ENCODE measurements at regions of chr1 and their contacts with region 1.

Region 1: DNA sequence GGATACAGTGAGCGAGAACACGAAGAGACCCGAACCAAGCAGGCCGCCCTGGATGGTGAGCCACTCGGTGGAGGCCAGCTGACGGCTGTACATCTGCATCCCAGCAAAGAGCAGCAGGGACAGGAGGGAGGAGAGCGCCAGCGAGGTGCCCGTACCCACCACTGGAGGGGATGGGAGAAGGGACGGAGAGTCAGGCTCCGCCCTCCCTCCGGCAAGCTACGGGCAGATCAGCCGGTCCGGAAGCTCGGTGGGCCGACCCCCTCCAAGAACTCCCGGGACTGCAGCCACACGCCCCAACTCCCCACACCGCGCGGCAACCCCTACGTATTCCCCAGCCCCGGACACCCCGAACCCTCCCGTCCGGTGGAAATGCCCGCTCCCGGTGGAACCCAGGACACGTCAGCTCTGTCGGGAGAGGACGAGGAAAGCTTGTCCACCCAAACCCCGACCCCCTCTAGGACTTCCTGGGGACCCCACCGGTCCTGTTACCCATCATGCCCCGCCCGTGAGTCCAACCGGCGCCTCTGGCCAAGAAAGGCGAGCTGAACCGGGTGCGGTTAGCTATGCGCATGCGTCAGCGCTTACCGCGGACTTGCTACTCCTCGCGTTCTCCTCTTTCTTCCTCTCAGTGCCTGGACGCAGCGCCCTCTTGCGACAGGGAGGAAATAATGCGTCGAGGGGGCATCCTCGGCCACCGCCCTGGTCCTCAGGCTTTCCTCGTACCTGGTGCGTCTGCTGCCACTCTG is at the start of gene KRTCAP2:
- DNase-seq: peak; percentile 97
- ATAC-seq: peak; percentile 83
- H3K4me3 Mint-ChIP-seq: peak within 1 kb of the TSS; percentile 96
- H3K27ac Mint-ChIP-seq: peak within 1 kb of the TSS; percentile 98
- H3K4me1 Mint-ChIP-seq: peaks cover 45% of the 10 kb centered on the region
- H3K27me3 Mint-ChIP-seq: no peaks in the 10 kb centered on the region
- CTCF ChIP-seq: peak; percentile 91
- total RNA-seq, gene KRTCAP2: 124 to 125 TPM

Region 2: GRCh38 chr1:154791292-154792166 is 381.4 kb before region 1 on chr1:
- CTCF ChIA-PET with region 1: no interaction called
- POLR2A ChIA-PET with region 1: no interaction called
- intact Hi-C with region 1: no loop called
- DNase-seq: peak; percentile 95
- ATAC-seq: peak; percentile 92
- H3K4me3 Mint-ChIP-seq: peak overlapping the region; percentile 57
- H3K27ac Mint-ChIP-seq: peak overlapping the region; percentile 87
- H3K4me1 Mint-ChIP-seq: peaks cover 31% of the 10 kb centered on the region
- H3K27me3 Mint-ChIP-seq: no peaks in the 10 kb centered on the region
- CTCF ChIP-seq: no peak

Region 3: GRCh38 chr1:155063550-155064110 is 109.3 kb before region 1 on chr1 and contains the start of gene EFNA4:
- CTCF ChIA-PET with region 1: interaction called, 10 read pairs
- POLR2A ChIA-PET with region 1: interaction called, 5 read pairs
- intact Hi-C with region 1: no loop called
- DNase-seq: peak; percentile 88
- ATAC-seq: peak; percentile 80
- H3K4me3 Mint-ChIP-seq: peak within 1 kb of the TSS; percentile 77
- H3K27ac Mint-ChIP-seq: peak within 1 kb of the TSS; percentile 39
- H3K4me1 Mint-ChIP-seq: peaks cover 32% of the 10 kb centered on the region
- H3K27me3 Mint-ChIP-seq: no peaks in the 10 kb centered on the region
- CTCF ChIP-seq: no peak
- total RNA-seq, gene EFNA4: 7.1 to 7.8 TPM

Region 4: DNA sequence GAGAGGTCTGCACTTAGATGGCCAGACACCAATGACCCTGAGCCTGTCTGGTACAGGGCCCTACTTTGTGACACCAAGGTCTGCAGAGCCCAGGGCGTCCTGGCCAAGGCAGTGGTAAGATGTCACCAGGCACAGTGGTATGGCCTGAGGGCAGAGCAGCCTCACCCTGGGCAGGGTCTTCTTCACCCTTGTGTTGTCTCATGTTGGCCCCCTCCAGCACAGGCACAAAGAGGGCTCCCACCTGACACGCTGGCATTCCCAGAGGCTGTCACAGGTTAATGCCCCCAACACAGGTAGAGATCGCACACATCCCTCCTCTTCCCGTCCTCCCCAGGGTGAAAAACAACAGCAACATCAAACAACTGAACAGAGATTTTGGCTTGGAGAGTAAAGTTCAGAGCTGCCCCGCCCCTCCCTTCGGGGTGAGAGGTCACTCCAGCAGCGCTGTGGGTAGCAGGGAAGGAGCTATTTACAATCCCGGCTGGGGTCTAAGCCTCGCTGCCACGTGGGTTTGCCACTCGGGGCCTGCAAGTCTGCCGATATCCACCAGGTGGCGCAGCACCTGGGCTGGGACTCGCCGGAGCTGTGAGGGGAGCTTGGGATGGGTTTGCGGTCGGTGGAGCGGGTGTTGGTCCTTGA is 81.7 kb before region 1 on chr1:
- CTCF ChIA-PET with region 1: interaction called, 312 read pairs
- POLR2A ChIA-PET with region 1: interaction called, 10 read pairs
- intact Hi-C with region 1: no loop called
- DNase-seq: peak; percentile 86
- ATAC-seq: peak; percentile 88
- H3K4me3 Mint-ChIP-seq: peak overlapping the region; percentile 12
- H3K27ac Mint-ChIP-seq: no peak overlapping the region
- H3K4me1 Mint-ChIP-seq: peaks cover 2% of the 10 kb centered on the region
- H3K27me3 Mint-ChIP-seq: peaks cover 9% of the 10 kb centered on the region
- CTCF ChIP-seq: peak; percentile 99

Region 5: GRCh38 chr1:155145491-155145890 is 27.4 kb before region 1 on chr1:
- CTCF ChIA-PET with region 1: interaction called, 69 read pairs
- POLR2A ChIA-PET with region 1: interaction called, 4 read pairs
- intact Hi-C with region 1: no loop called
- DNase-seq: no peak
- ATAC-seq: no peak
- H3K4me3 Mint-ChIP-seq: no peak overlapping the region
- H3K27ac Mint-ChIP-seq: no peak overlapping the region
- H3K4me1 Mint-ChIP-seq: peaks cover 7% of the 10 kb centered on the region
- H3K27me3 Mint-ChIP-seq: peaks cover 7% of the 10 kb centered on the region
- CTCF ChIP-seq: no peak

Region 6: DNA sequence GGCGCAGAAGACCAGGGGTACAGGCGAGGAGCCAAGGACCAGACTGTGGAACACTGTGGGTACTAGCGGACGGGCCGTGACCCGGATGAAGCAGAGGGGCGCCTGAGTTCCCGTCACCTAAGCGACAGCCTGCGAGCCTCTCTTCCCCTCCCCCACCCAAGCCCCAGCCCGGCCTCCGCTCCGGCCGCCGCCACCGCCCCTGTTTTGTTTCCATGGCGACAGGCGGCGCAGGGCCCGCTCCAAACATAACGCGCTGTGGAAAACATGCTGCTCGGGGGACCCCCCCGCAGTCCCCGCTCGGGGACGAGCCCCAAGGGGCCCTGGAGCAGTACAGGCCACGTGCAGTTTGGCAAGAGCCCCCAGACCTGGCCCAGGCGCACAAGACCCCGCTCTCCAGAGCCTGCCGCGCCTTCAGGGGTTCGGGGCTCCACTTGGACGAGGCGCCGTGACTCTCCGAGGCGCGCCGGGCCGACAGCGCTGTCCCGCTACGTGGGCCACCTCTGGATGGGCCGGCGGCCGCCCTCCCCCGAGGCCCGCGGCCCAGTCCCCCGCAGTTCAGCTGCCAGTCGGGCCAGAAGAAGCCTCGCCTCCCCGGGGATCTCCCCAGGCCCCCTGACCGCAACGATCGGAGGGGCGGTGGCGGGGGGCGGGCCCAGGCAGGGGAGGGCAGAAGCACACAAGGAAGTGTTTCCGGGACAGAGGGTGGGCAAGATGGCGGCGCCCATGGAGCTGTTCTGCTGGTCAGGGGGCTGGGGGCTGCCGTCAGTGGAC is 35.8 kb after region 1 on chr1 and contains the start of gene MTX1:
- CTCF ChIA-PET with region 1: interaction called, 41 read pairs
- POLR2A ChIA-PET with region 1: interaction called, 4 read pairs
- intact Hi-C with region 1: no loop called
- DNase-seq: peak; percentile 94
- ATAC-seq: peak; percentile 86
- H3K4me3 Mint-ChIP-seq: peak within 1 kb of the TSS; percentile 92
- H3K27ac Mint-ChIP-seq: peak within 1 kb of the TSS; percentile 89
- H3K4me1 Mint-ChIP-seq: peaks cover 29% of the 10 kb centered on the region
- H3K27me3 Mint-ChIP-seq: no peaks in the 10 kb centered on the region
- CTCF ChIP-seq: no peak
- total RNA-seq, gene MTX1: 59.2 to 61.0 TPM